ENCODE measurements at regions of chr19 and their contacts with region 1.

Region 1: DNA sequence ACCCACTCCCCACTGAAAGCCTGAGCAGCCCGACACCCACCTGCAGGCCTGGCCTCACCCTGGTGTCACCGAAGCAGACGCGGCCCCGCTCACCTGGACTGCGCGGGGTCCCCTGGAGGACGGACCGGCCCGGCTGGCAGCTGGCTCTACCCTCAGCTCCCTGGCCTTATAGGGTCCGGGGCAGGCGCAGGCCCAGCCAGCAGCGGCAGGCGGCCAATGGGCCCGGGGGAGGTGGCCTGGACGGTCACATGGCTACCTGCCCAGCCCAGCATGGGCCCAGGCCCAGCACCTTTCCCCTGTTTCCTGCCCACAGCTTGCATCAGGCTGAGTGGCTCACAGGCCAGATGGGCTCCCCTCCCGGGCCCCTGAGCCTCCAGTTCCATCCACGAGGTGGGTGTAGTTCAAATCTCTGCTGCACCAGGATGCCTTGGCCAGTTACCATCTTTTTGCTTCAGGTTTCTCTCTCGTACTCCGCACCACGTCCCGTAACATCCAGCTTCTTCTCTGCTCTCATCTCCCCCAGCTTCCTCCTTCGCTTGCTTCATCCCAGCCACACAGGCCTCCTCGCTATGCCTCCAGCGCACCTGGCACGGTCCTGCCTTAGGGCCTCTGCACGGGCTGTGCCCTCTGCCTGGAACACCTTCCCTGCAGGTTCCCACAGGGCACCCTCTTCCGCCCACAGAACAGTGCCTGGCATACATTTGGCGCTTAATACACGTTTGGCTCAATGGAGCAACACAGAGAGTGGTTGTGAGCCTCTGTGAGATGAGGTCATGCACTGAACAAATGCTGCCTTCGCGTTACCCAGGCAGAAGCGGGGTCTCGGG is at the start of gene PLIN4:
- DNase-seq: peak; percentile 34
- ATAC-seq: peak; percentile 50
- H3K4me3 Mint-ChIP-seq: no peak within 1 kb of the TSS
- H3K27ac Mint-ChIP-seq: no peak within 1 kb of the TSS
- H3K4me1 Mint-ChIP-seq: no peaks in the 10 kb centered on the region
- H3K27me3 Mint-ChIP-seq: peaks cover 78% of the 10 kb centered on the region
- CTCF ChIP-seq: no peak
- total RNA-seq, gene PLIN4: 0.35 to 0.62 TPM (median 0.57 TPM) in 3 replicates

Region 2: GRCh38 chr19:4443966-4444764 is 74.4 kb before region 1 on chr19:
- CTCF ChIA-PET with region 1: no interaction called
- POLR2A ChIA-PET with region 1: no interaction called
- DNase-seq: no peak
- ATAC-seq: no peak
- H3K4me3 Mint-ChIP-seq: no peak overlapping the region
- H3K27ac Mint-ChIP-seq: peak overlapping the region; percentile 81
- H3K4me1 Mint-ChIP-seq: 0 out of 2 replicates have a peak, but pooled peaks cover 3% of the 10 kb centered on the region
- H3K27me3 Mint-ChIP-seq: no peaks in the 10 kb centered on the region
- CTCF ChIP-seq: no peak

Region 3: GRCh38 chr19:4482721-4483364 is 35.7 kb before region 1 on chr19:
- CTCF ChIA-PET with region 1: interaction called, 8 read pairs
- POLR2A ChIA-PET with region 1: interaction called, 10 read pairs
- DNase-seq: no peak
- ATAC-seq: peak; percentile 52; the same call in 1 of the 2 replicates
- H3K4me3 Mint-ChIP-seq: no peak overlapping the region
- H3K27ac Mint-ChIP-seq: no peak overlapping the region
- H3K4me1 Mint-ChIP-seq: no peaks in the 10 kb centered on the region
- H3K27me3 Mint-ChIP-seq: no peaks in the 10 kb centered on the region
- CTCF ChIP-seq: no peak

Measured in WTC11 (cell line).